Ascending aorta (tissue), 2 donors: ENCODE measurements at regions of chr10 and their contacts with region 1.

Region 1: GRCh38 chr10:22714479-22715289 is at the start of gene PIP4K2A:
- DNase-seq: peak in 1 of 2 donors; percentile 86
- H3K4me3 ChIP-seq: peak within 1 kb of the TSS; percentile 89 to 96
- H3K27ac ChIP-seq: peak within 1 kb of the TSS; percentile 90 to 92
- H3K4me1 ChIP-seq: peaks cover 0 to 14% of the 10 kb centered on the region in 2 donors
- H3K27me3 ChIP-seq: no peaks in the 10 kb centered on the region
- CTCF ChIP-seq: no peak
- total RNA-seq, gene PIP4K2A: 34.9 TPM

Region 2: DNA sequence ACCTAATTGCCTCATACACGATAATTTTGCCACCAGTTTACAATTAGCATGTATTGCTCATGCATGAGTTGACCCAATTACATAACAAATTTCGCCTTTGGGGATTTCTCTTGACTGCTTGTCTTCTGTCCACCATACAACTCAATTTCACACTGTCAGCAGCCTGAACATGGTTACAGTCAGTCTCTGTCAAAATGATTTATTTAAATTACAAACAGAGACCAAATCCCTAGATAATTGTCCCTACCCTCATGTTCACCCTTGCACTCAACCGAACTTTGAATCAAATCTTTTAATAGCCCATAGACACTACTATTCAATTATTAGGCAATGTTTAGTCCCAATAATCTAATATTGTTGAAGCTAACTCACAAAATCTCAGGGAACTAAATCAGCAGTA is 1757.8 kb before region 1 on chr10:
- intact Hi-C with region 1: no loop called
- DNase-seq: no peak
- H3K4me3 ChIP-seq: no peak overlapping the region
- H3K27ac ChIP-seq: no peak overlapping the region
- H3K4me1 ChIP-seq: no peaks in the 10 kb centered on the region
- H3K27me3 ChIP-seq: no peaks in the 10 kb centered on the region
- CTCF ChIP-seq: no peak

Region 3: GRCh38 chr10:21525367-21526183 is 1189.1 kb before region 1 on chr10 and contains the start of gene SKIDA1:
- intact Hi-C with region 1: loop called (anchors 5 kb)
- DNase-seq: peak; percentile 25 to 90
- H3K4me3 ChIP-seq: peak within 1 kb of the TSS; percentile 65 to 90
- H3K27ac ChIP-seq: peak within 1 kb of the TSS; percentile 98 to 100
- H3K4me1 ChIP-seq: peaks cover 0 to 3% of the 10 kb centered on the region in 2 donors
- H3K27me3 ChIP-seq: no peaks in the 10 kb centered on the region
- CTCF ChIP-seq: no peak
- total RNA-seq, gene SKIDA1: not detected

Region 4: DNA sequence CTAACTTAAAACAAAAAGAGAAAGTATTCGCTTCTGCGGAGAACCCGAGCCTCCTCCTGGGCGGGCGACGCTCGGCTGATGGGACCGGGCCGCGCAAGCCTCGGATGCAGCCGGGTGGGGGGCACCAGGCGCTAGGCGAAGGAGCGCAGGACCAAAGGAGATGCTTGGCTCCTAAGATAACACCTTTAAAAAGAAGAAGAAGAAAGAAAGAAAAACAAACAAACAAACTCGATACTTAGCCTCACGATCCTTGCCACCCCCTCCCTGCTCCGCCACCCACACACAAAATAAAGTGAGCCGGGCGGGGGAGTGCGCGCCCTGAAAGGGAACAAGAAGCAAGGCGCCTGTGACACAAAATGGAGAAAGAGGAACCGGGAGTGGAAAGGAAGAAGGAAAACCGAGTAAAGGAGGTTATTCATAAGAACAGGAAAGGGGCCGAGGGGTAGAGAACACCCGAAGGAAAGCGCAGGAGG is 462.9 kb before region 1 on chr10:
- intact Hi-C with region 1: loop called (anchors 10 kb)
- DNase-seq: peak in 1 of 2 donors; percentile 81
- H3K4me3 ChIP-seq: peak overlapping the region; percentile 81 to 93
- H3K27ac ChIP-seq: peak overlapping the region; percentile 98
- H3K4me1 ChIP-seq: no peaks in the 10 kb centered on the region
- H3K27me3 ChIP-seq: no peaks in the 10 kb centered on the region
- CTCF ChIP-seq: no peak

Region 5: DNA sequence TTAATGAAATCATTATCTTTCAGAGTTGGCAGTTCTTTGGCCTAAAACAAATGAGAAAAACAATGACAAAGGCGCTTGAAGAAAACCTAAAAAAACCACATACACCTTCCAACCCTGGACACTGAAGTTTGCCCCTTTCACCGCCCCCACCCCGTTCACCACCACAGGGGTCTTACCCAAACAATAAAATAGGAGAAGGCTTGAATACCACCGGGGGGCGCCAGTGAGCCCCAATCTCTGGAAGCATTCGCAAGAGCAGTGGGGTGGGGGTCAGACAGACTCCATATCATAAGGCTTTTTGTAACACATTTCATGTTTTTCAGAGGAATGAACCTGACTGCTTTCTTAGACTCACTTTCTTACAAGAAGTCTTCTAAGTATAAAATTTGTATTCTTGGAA is 164.0 kb before region 1 on chr10:
- intact Hi-C with region 1: loop called (anchors 5 kb)
- DNase-seq: peak in 1 of 2 donors; percentile 67
- H3K4me3 ChIP-seq: no peak overlapping the region
- H3K27ac ChIP-seq: no peak overlapping the region
- H3K4me1 ChIP-seq: no peaks in the 10 kb centered on the region
- H3K27me3 ChIP-seq: no peaks in the 10 kb centered on the region
- CTCF ChIP-seq: peak in 2 of 3 experiments; percentile 46 to 59

Region 6: DNA sequence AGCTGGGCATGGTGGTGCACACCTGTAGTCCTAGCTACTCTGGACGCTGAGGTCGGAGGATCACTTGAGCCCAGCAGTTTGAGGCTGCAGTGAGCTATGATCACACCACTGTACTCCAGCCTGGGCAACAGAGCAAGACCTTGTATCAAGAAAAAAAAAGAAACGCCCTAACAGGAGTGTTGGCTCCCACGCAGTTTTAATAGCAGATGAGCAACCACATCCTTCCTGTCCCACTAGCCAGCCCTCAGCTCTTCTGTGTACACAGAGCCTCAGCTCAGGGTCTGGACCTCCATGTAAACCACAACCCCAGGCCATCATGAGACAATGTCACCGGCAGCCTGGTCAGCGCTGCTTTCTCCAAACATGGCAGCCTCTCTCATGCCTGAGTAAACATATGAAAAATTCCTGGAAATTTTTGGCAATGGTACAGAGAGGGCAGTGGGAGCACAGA is 108.5 kb before region 1 on chr10:
- intact Hi-C with region 1: no loop called
- DNase-seq: peak; percentile 58 to 76
- H3K4me3 ChIP-seq: no peak overlapping the region
- H3K27ac ChIP-seq: no peak overlapping the region
- H3K4me1 ChIP-seq: no peaks in the 10 kb centered on the region
- H3K27me3 ChIP-seq: no peaks in the 10 kb centered on the region
- CTCF ChIP-seq: no peak

Region 7: GRCh38 chr10:22765660-22766547 is 51.2 kb after region 1 on chr10:
- intact Hi-C with region 1: loop called (anchors 5 kb)
- DNase-seq: no peak
- H3K4me3 ChIP-seq: no peak overlapping the region
- H3K27ac ChIP-seq: peak overlapping the region; percentile 77 to 79
- H3K4me1 ChIP-seq: peaks cover 11 to 32% of the 10 kb centered on the region in 2 donors
- H3K27me3 ChIP-seq: no peaks in the 10 kb centered on the region
- CTCF ChIP-seq: no peak

Region 8: GRCh38 chr10:23067939-23068775 is 353.5 kb after region 1 on chr10:
- intact Hi-C with region 1: loop called (anchors 2 kb)
- DNase-seq: peak in 1 of 2 donors; percentile 93
- H3K4me3 ChIP-seq: no peak overlapping the region
- H3K27ac ChIP-seq: peak overlapping the region; percentile 28 to 33
- H3K4me1 ChIP-seq: peaks cover 5 to 12% of the 10 kb centered on the region in 2 donors
- H3K27me3 ChIP-seq: no peaks in the 10 kb centered on the region
- CTCF ChIP-seq: peak; percentile 44 to 87 (median 86)